Stomach (tissue), 19 donors: ENCODE measurements at regions of chr17 and their contacts with region 1.

Region 1: GRCh38 chr17:74464730-74465377 is 1.6 kb upstream of the CD300A start:
- DNase-seq: no peak
- H3K4me3 ChIP-seq: no peak overlapping the region
- H3K27ac ChIP-seq: peak overlapping the region in 2 of 5 donors; percentile 80 to 81
- H3K4me1 ChIP-seq: peaks cover 0 to 50% (median 11%) of the 10 kb centered on the region in 4 donors
- H3K27me3 ChIP-seq: peaks cover 0 to 29% (median 12%) of the 10 kb centered on the region in 3 donors
- CTCF ChIP-seq: no peak
- EP300 ChIP-seq: no peak
- POLR2A ChIP-seq: no peak

Region 2: DNA sequence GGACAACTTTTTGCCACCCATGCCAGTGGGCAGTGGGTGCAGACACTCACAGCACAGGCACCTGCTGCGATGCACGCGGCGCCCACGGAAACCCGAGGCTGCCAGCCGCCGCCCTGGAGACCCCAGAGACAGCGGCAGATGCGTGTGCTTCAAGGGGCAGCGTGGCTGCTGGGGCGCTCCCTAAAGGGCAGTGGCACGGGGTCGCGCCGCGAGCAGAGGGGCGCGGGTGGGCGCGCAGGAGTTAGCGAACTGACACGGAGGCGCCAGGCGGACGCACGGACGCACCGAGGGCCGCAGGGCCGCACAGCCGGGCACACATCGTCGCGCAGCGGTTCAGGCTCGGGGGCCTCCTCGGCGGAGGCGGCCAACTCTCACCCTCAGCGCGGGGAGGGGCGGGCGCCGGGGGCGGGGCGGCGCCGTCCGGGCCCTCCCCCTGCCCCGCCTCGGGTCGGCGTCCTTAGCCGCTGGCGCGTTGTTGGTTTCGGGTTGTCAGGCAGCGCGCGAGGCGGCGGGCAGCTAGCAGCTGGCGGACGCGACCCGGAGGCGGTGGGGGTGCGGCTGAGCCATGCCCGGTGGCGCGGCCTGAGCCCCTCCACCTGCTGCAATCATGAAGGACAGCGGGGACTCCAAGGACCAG is 139.0 kb before region 1 on chr17 and contains the start of gene KIF19:
- intact Hi-C with region 1: no loop called
- DNase-seq: peak; percentile 55 to 79
- H3K4me3 ChIP-seq: peak within 1 kb of the TSS; percentile 40 to 51 (median 42)
- H3K27ac ChIP-seq: peak within 1 kb of the TSS in 2 of 5 donors; percentile 18 to 22
- H3K4me1 ChIP-seq: peaks cover 14 to 24% (median 18%) of the 10 kb centered on the region in 4 donors
- H3K27me3 ChIP-seq: peaks cover 0 to 52% (median 29%) of the 10 kb centered on the region in 3 donors
- CTCF ChIP-seq: no peak
- EP300 ChIP-seq: no peak
- POLR2A ChIP-seq: no peak
- total RNA-seq, gene KIF19: 0.58 to 44.3 TPM in 2 of 5 donors, not detected in the others

Region 3: DNA sequence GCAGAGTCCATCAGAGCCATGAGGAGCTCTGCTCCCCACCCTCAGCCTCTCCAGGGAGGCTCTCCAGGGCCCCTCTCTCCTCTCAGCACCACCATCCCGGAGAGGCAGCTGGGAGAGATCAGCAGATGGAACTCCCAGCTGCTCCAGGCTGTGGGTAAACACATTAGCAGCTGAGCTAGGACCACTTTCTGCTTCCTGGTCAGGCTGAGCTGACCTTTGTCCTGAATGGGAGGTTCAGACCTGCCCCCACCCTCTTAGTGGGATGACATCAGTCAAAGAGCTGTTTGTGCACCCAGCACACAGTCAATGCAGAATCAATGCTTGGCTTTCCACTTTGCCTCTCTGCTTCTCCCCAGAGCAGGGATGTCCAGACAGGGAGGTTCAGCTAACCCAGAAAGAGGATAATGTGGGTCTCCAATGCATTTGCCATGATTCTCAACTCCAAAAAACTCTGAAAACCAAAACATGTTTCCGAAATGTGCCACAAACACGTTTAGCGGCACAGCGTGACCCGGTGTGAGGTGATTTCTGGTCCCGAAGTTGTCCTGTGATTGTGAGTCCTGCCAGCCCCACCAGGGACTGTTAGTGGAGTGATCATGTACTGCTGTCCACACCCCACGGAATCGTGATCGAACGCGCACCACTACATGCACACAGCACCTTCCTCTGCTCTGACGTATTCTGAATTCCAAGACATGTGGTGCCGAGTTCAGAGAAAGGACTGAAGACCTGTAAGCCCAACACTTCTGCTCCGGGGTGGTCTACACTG is 90.8 kb before region 1 on chr17:
- intact Hi-C with region 1: loop called (anchors 2 kb)
- DNase-seq: peak; percentile 42 to 89
- H3K4me3 ChIP-seq: no peak overlapping the region
- H3K27ac ChIP-seq: peak overlapping the region in 4 of 5 donors; percentile 11 to 39 (median 32)
- H3K4me1 ChIP-seq: peaks cover 4 to 16% (median 10%) of the 10 kb centered on the region in 4 donors
- H3K27me3 ChIP-seq: peaks cover 0 to 25% (median 7%) of the 10 kb centered on the region in 3 donors
- CTCF ChIP-seq: no peak
- EP300 ChIP-seq: no peak
- POLR2A ChIP-seq: no peak

Region 4: DNA sequence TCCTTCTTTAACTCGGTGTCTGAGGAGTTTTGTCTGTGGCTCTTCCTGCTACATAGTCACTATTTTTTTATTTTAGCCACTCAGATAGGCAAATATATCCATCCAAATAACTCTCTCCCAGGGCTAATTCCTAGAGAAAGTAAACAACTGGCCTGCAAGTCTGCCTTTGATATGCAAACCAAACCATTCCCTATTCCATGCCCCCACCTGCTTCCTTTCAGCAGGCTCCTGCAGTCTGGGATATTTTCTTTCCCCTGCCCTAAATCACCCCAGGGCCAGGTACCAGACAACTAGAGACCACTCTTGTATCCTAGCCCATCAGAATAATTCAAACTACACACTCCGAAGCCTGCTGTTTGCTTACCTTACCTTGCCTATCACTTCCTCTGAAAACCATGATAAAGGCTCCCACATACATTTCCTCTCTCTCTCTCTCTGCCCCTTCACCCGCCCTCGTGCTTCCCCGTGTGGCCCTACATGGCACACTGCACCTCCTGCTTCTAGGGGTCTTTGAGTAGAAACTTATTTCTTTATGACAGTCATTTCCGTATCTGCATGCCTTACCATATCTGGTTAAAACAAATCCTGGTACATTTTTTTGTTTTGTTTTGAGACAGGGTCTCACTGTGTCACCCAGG is 94.1 kb after region 1 on chr17:
- intact Hi-C with region 1: no loop called
- DNase-seq: no peak
- H3K4me3 ChIP-seq: no peak overlapping the region
- H3K27ac ChIP-seq: no peak overlapping the region
- H3K4me1 ChIP-seq: no peaks in the 10 kb centered on the region
- H3K27me3 ChIP-seq: peaks cover 0 to 13% (median 0%) of the 10 kb centered on the region in 3 donors
- CTCF ChIP-seq: no peak
- EP300 ChIP-seq: no peak
- POLR2A ChIP-seq: no peak